ENCODE measurements at regions of chr19 and their contacts with region 1.

Region 1: GRCh38 chr19:7355151-7355820 is 6.5 kb downstream of the ARHGEF18 start:
- DNase-seq: no peak
- ATAC-seq: no peak
- H3K4me3 ChIP-seq: no peak overlapping the region
- H3K4me3 Mint-ChIP-seq: no peak overlapping the region
- H3K27ac ChIP-seq: peak overlapping the region in 1 of 2 donors; percentile 15
- H3K27ac Mint-ChIP-seq: peak overlapping the region; percentile 89
- H3K4me1 ChIP-seq: peaks cover 64 to 85% of the 10 kb centered on the region in 2 donors
- H3K4me1 Mint-ChIP-seq: peaks cover 75% of the 10 kb centered on the region
- H3K27me3 ChIP-seq: no peaks in the 10 kb centered on the region
- H3K27me3 Mint-ChIP-seq: no peaks in the 10 kb centered on the region
- CTCF ChIP-seq: no peak

Region 2: DNA sequence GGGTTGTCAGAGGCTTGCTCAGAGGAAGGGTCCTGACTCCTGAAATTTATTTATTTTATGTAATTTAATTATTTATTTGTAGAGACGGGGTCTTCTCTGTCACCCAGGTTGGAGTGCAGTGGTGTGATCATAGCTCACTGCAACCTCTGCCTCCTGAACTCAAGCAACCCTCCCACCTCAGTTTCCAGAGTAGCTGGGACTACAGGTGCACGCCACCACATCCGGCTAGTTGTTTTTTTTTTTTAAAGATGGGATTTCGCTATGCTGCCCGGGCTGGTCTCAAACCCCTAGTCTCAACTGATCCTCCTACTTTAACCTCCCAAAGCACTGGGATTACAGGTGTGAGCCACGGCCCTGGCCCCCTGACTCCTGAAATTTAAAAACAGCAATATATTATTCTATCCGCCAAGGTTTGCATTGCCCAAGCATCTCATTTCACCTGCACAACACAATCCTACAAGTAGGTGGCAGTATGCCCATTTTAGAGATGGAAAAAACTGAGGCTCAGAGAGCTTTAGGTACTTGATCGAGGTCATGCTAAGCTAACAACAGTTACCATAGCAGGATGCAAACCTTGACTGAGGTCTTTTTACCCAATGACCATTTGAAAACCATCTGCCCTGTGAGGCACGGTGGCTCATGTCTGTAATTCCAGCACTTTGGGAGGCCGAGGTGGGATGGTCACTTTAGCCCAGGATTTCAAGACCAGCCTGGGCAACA is 11.6 kb after region 1 on chr19:
- CTCF ChIA-PET with region 1: interaction called, 41 read pairs
- POLR2A ChIA-PET with region 1: interaction called, 3 read pairs
- intact Hi-C with region 1: no loop called
- DNase-seq: peak; percentile 47
- ATAC-seq: peak; percentile 57
- H3K4me3 ChIP-seq: no peak overlapping the region
- H3K4me3 Mint-ChIP-seq: no peak overlapping the region
- H3K27ac ChIP-seq: no peak overlapping the region
- H3K27ac Mint-ChIP-seq: peak overlapping the region; percentile 76
- H3K4me1 ChIP-seq: peaks cover 0 to 6% of the 10 kb centered on the region in 2 donors
- H3K4me1 Mint-ChIP-seq: peaks cover 31% of the 10 kb centered on the region
- H3K27me3 ChIP-seq: no peaks in the 10 kb centered on the region
- H3K27me3 Mint-ChIP-seq: no peaks in the 10 kb centered on the region
- CTCF ChIP-seq: peak; percentile 54

Region 3: DNA sequence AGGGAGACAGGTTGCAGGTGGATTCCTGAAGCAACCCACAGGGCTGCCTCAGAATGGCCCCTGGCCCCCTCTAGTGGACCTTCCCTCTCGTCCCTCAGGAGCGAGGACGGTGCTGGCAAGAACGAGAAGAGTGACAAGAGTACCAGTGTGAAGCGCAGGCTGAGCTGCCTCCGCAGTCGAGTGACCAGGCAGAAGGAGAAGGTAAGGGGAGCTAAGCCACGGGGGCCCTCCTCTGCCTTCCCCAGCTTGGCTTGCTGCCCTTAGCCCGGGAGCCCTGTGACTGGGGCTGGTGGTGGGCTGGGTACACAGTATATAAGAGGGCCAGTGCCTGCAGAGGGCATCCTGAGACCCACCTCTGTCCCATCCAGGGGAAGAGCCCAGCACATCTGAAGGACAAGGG is 27.4 kb after region 1 on chr19:
- CTCF ChIA-PET with region 1: interaction called, 57 read pairs
- POLR2A ChIA-PET with region 1: interaction called, 5 read pairs
- intact Hi-C with region 1: loop called (anchors 1 kb)
- DNase-seq: no peak
- ATAC-seq: no peak
- H3K4me3 ChIP-seq: no peak overlapping the region
- H3K4me3 Mint-ChIP-seq: no peak overlapping the region
- H3K27ac ChIP-seq: peak overlapping the region in 1 of 2 donors; percentile 52
- H3K27ac Mint-ChIP-seq: peak overlapping the region; percentile 37
- H3K4me1 ChIP-seq: peaks cover 0 to 12% of the 10 kb centered on the region in 2 donors
- H3K4me1 Mint-ChIP-seq: peaks cover 20% of the 10 kb centered on the region
- H3K27me3 ChIP-seq: no peaks in the 10 kb centered on the region
- H3K27me3 Mint-ChIP-seq: no peaks in the 10 kb centered on the region
- CTCF ChIP-seq: no peak

Measured in B cell (primary cell).